Kidney (tissue), 22 donors: ENCODE measurements at regions of chr17 and their contacts with region 1.

Region 1: GRCh38 chr17:61849674-61850073 is 13.7 kb downstream of the BRIP1 start:
- DNase-seq: peak in 2 of 5 donors; percentile 13 to 75
- H3K4me3 ChIP-seq: no peak overlapping the region
- H3K27ac ChIP-seq: no peak overlapping the region
- H3K4me1 ChIP-seq: no peaks in the 10 kb centered on the region
- H3K27me3 ChIP-seq: no peaks in the 10 kb centered on the region
- CTCF ChIP-seq: no peak

Region 2: DNA sequence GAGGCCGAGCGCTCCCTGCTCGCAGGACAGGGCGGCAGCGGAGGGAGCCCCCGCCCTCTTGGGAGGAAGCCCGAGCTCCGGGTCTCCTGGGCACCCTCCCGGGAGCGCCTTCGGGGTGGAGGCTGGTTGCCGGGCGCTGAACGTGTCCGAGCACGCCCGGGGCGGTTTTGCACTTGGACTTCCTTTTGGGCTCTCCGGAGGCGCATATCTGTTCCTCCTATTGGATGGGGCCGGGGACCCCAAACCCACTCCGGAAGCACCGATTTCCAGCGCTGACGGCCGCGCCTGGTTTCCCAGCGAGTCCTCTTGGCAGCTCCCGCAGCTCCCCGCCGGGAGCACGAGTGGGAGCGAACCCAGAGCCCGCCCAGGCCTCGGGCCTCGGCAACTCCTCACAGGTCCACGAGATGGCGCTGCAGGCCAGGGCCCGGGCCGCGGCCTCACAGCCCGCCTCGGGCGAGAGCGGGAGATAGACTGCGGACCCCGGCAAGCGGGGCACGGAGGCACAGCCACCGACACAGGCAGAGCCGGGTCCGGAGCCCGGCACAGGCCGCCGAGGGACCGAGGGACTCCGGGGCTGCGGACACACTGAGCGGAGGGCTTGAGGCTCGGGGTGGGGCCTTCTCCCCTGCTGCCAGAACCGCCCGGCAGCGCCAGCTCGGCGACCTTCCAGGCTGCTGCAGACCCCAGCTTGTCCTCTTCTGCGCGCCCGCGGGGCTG is 437.4 kb before region 1 on chr17:
- intact Hi-C with region 1: loop called (anchors 10 kb)
- DNase-seq: peak; percentile 86 to 94 (median 93)
- H3K4me3 ChIP-seq: peak overlapping the region; percentile 36 to 60 (median 49)
- H3K27ac ChIP-seq: peak overlapping the region; percentile 93 to 94
- H3K4me1 ChIP-seq: peaks cover 0 to 22% (median 7%) of the 10 kb centered on the region in 3 donors
- H3K27me3 ChIP-seq: peaks cover 4% of the 10 kb centered on the region
- CTCF ChIP-seq: peak; percentile 91